CD4-positive, alpha-beta memory T cell (primary cell): ENCODE measurements at regions of chr6 and their contacts with region 1.

Region 1: DNA sequence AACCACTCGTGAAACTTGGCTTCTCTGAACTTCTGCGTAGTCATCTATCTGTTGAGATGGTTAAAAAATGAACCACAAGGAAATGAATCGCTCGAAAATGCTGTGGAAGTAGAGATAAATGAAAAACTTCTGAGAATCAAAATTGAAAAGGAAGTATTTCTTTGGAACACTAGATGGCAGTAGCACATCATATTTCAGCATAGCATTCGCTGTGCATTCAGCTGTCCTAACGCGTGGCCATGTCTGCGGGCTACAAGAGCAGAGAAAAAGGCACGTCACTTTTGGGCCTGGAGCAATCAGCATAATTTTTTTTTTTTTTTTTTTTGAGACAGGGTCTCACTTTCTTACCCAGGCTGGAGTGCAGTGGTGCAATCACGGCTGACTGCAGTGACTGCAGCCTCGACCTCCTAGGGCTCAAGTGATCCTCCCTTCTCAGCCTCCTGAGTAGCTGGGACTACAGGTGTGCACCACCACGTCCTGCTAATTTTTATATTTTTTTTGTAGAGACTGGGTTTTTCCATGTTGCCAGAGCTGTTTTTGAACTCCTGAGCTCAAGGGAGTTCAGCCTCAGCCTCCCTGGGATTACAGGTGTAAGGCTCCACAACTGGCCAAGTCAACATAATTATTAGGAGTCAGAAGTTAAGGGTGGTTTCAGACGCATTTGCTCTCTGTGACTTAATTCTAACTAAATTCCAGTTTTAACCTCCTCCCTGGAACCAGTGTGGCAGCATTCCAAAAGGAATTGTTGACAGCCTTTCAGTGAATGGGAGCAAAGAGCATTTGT is 8.8 kb upstream of the PERP start:
- DNase-seq: peak; percentile 53 to 64 (median 62)
- H3K4me3 ChIP-seq: no peak overlapping the region
- H3K4me3 Mint-ChIP-seq: peak overlapping the region in 1 of 8 donors; percentile 20
- H3K27ac ChIP-seq: no peak overlapping the region
- H3K27ac Mint-ChIP-seq: no peak overlapping the region
- H3K4me1 ChIP-seq: no peaks in the 10 kb centered on the region
- H3K4me1 Mint-ChIP-seq: peaks cover 3 to 5% (median 4%) of the 10 kb centered on the region in 4 donors
- H3K27me3 ChIP-seq: no peaks in the 10 kb centered on the region
- H3K27me3 Mint-ChIP-seq: peaks cover 20 to 21% of the 10 kb centered on the region in 2 donors

Region 2: DNA sequence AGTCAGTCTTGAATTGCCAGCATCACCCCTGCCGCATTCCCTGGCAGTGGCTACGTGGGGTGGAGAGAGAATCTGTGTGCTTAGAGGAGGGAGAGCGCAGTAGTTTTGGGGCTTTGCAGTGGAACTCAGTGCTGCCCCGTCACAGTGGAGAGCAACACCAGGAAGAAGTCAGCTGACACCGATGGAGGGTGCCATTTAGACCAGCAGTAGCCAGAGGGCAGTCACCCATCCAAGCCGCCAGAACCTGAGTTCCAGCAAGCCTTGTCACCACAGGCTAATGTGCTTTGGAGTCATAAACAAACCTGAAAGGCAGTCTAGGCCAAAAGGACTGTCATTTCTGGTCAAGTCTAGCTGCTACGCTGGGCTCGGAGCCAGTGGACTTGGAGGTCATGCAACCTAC is 13.1 kb after region 1 on chr6:
- CTCF ChIA-PET with region 1: interaction called, 13 read pairs
- POLR2A ChIA-PET with region 1: no interaction called
- intact Hi-C with region 1: no loop called
- DNase-seq: no peak
- H3K4me3 ChIP-seq: no peak overlapping the region
- H3K4me3 Mint-ChIP-seq: no peak overlapping the region
- H3K27ac ChIP-seq: no peak overlapping the region
- H3K27ac Mint-ChIP-seq: no peak overlapping the region
- H3K4me1 ChIP-seq: no peaks in the 10 kb centered on the region
- H3K4me1 Mint-ChIP-seq: no peaks in the 10 kb centered on the region
- H3K27me3 ChIP-seq: no peaks in the 10 kb centered on the region
- H3K27me3 Mint-ChIP-seq: peaks cover 6 to 7% of the 10 kb centered on the region in 2 donors

Region 3: GRCh38 chr6:138287144-138287955 is 171.3 kb after region 1 on chr6:
- CTCF ChIA-PET with region 1: interaction called, 59 read pairs
- POLR2A ChIA-PET with region 1: no interaction called
- intact Hi-C with region 1: loop called (anchors 1 kb)
- DNase-seq: peak; percentile 26 to 53 (median 39)
- H3K4me3 ChIP-seq: no peak overlapping the region
- H3K4me3 Mint-ChIP-seq: peak overlapping the region in 1 of 8 donors; percentile 48
- H3K27ac ChIP-seq: no peak overlapping the region
- H3K27ac Mint-ChIP-seq: peak overlapping the region in 1 of 7 donors; percentile 31
- H3K4me1 ChIP-seq: no peaks in the 10 kb centered on the region
- H3K4me1 Mint-ChIP-seq: peaks cover 0 to 1% (median 0%) of the 10 kb centered on the region in 4 donors
- H3K27me3 ChIP-seq: no peaks in the 10 kb centered on the region
- H3K27me3 Mint-ChIP-seq: peaks cover 0 to 3% of the 10 kb centered on the region in 2 donors

Region 4: GRCh38 chr6:138509371-138509770 is 393.3 kb after region 1 on chr6:
- CTCF ChIA-PET with region 1: interaction called, 78 read pairs
- POLR2A ChIA-PET with region 1: no interaction called
- intact Hi-C with region 1: loop called (anchors 2 kb)
- DNase-seq: peak; percentile 30 to 48 (median 43)
- H3K4me3 ChIP-seq: no peak overlapping the region
- H3K4me3 Mint-ChIP-seq: no peak overlapping the region
- H3K27ac ChIP-seq: no peak overlapping the region
- H3K27ac Mint-ChIP-seq: no peak overlapping the region
- H3K4me1 ChIP-seq: peaks cover under 1% of the 10 kb centered on the region
- H3K4me1 Mint-ChIP-seq: peaks cover 0 to 4% (median under 1%) of the 10 kb centered on the region in 4 donors
- H3K27me3 ChIP-seq: no peaks in the 10 kb centered on the region
- H3K27me3 Mint-ChIP-seq: peaks cover 0 to 1% of the 10 kb centered on the region in 2 donors

Region 5: GRCh38 chr6:138517635-138518034 is 401.6 kb after region 1 on chr6:
- CTCF ChIA-PET with region 1: interaction called, 141 read pairs
- POLR2A ChIA-PET with region 1: interaction called, 3 read pairs
- intact Hi-C with region 1: loop called (anchors 1 kb)
- DNase-seq: peak; percentile 49 to 58 (median 51)
- H3K4me3 ChIP-seq: no peak overlapping the region
- H3K4me3 Mint-ChIP-seq: no peak overlapping the region
- H3K27ac ChIP-seq: no peak overlapping the region
- H3K27ac Mint-ChIP-seq: peak overlapping the region in 1 of 7 donors; percentile 29
- H3K4me1 ChIP-seq: peaks cover 5% of the 10 kb centered on the region
- H3K4me1 Mint-ChIP-seq: peaks cover 3 to 19% (median 10%) of the 10 kb centered on the region in 4 donors
- H3K27me3 ChIP-seq: no peaks in the 10 kb centered on the region
- H3K27me3 Mint-ChIP-seq: peaks cover 10% of the 10 kb centered on the region in 2 donors

Region 6: GRCh38 chr6:138765896-138766655 is 650.0 kb after region 1 on chr6:
- CTCF ChIA-PET with region 1: interaction called, 53 read pairs
- POLR2A ChIA-PET with region 1: no interaction called
- intact Hi-C with region 1: loop called (anchors 1 kb)
- DNase-seq: peak in 4 of 5 donors; percentile 31 to 36 (median 34)
- H3K4me3 ChIP-seq: no peak overlapping the region
- H3K4me3 Mint-ChIP-seq: no peak overlapping the region
- H3K27ac ChIP-seq: no peak overlapping the region
- H3K27ac Mint-ChIP-seq: no peak overlapping the region
- H3K4me1 ChIP-seq: no peaks in the 10 kb centered on the region
- H3K4me1 Mint-ChIP-seq: no peaks in the 10 kb centered on the region
- H3K27me3 ChIP-seq: no peaks in the 10 kb centered on the region
- H3K27me3 Mint-ChIP-seq: peaks cover 0 to 2% of the 10 kb centered on the region in 2 donors